CD8-positive, alpha-beta T cell (primary cell): ENCODE measurements at regions of chr1 and their contacts with region 1.

Region 1: DNA sequence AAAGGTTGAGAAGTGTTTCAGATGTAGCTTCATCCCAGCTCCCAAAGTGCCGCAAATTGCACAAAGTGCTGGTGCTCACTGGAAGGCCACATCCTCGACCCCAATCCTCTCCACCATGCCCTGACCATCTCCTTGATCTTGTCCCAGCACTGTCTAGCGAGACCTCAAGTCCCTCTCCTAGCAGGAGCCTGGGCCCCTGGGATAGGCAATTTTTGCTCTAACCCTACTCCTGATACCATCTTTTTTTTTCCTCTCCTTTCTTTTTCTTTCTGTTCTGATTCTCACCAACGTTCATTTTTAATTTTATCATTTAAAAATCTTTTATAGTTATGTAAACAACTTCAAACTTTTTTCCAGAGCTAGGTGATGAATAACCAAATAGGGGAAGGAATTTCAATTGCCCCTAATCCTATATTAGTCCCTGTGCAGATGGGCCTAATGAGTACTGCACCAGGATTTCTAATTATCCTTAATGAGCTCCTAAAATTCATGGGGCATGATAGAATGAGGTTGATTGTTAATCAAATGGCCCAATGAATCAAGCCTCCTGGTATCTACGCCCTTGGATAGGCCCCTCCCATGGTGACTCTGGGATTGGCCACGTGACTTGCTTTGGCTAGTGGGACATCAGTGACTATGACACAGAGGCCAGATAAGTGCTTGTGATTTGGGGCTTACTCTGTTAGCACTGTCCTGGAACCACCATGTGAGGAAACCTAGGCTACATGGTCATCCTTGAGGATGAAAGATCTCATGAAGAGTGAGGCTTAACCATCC is 41.5 kb upstream of the TENT5B start:
- DNase-seq: no peak
- ATAC-seq: no peak
- H3K4me3 ChIP-seq: no peak overlapping the region
- H3K4me3 Mint-ChIP-seq: no peak overlapping the region
- H3K27ac ChIP-seq: no peak overlapping the region
- H3K27ac Mint-ChIP-seq: no peak overlapping the region
- H3K4me1 ChIP-seq: no peaks in the 10 kb centered on the region
- H3K4me1 Mint-ChIP-seq: no peaks in the 10 kb centered on the region
- H3K27me3 ChIP-seq: no peaks in the 10 kb centered on the region
- H3K27me3 Mint-ChIP-seq: no peaks in the 10 kb centered on the region
- CTCF ChIP-seq: no peak

Region 2: GRCh38 chr1:27097484-27097917 is 43.3 kb after region 1 on chr1:
- CTCF ChIA-PET with region 1: interaction called, 13 read pairs
- POLR2A ChIA-PET with region 1: no interaction called
- intact Hi-C with region 1: no loop called
- DNase-seq: peak; percentile 47 to 83 (median 73)
- ATAC-seq: peak; percentile 100
- H3K4me3 ChIP-seq: no peak overlapping the region
- H3K4me3 Mint-ChIP-seq: no peak overlapping the region
- H3K27ac ChIP-seq: no peak overlapping the region
- H3K27ac Mint-ChIP-seq: no peak overlapping the region
- H3K4me1 ChIP-seq: no peaks in the 10 kb centered on the region
- H3K4me1 Mint-ChIP-seq: peaks cover 3% of the 10 kb centered on the region
- H3K27me3 ChIP-seq: no peaks in the 10 kb centered on the region
- H3K27me3 Mint-ChIP-seq: no peaks in the 10 kb centered on the region
- CTCF ChIP-seq: peak; percentile 90